ENCODE measurements at regions of chr5 and their contacts with region 1.

Region 1: GRCh38 chr5:147863454-147864206 is 14.9 kb upstream of the SCGB3A2 start:
- DNase-seq: no peak
- H3K4me3 ChIP-seq: no peak overlapping the region
- H3K27ac ChIP-seq: no peak overlapping the region
- H3K4me1 ChIP-seq: peaks cover 2 to 21% (median 19%) of the 10 kb centered on the region in 4 experiments; a peak in 6 of 7 replicates
- H3K27me3 ChIP-seq: no peaks in the 10 kb centered on the region
- CTCF ChIP-seq: no peak
- EP300 ChIP-seq: no peak
- POLR2A ChIP-seq: peak in 1 of 2 experiments; percentile 69; a peak in 1 of 3 replicates
- RAD21 ChIP-seq: no peak

Region 2: DNA sequence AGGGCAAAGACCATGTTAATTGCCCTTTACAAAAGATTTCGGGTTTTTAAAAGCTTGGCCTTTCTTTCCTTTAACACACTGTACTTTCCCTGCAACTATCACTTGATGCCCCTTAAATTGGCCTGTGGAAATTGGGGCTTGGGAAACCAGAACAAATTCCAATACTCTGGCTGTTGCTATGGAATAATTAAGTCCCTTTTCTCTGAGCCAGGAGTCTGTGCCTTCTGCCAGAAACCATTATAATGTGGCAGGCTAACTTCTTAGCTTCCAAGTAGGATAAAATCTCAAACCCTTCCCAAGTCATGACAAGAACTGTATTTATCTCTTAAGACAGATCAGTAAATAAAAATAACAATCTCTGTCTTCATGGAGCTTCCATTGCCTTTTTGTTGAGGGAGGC is 31.1 kb before region 1 on chr5:
- CTCF ChIA-PET with region 1: no interaction called
- POLR2A ChIA-PET with region 1: interaction called, 12 read pairs
- DNase-seq: no peak
- H3K4me3 ChIP-seq: no peak overlapping the region
- H3K27ac ChIP-seq: no peak overlapping the region
- H3K4me1 ChIP-seq: no peaks in the 10 kb centered on the region
- H3K27me3 ChIP-seq: no peaks in the 10 kb centered on the region
- CTCF ChIP-seq: no peak
- EP300 ChIP-seq: no peak
- POLR2A ChIP-seq: no peak
- RAD21 ChIP-seq: no peak